ENCODE measurements at regions of chr17 and their contacts with region 1.

Region 1: GRCh38 chr17:81412490-81413093 is 17.3 kb downstream of the BAHCC1 start:
- DNase-seq: no peak
- H3K4me3 ChIP-seq: no peak overlapping the region
- H3K27ac ChIP-seq: no peak overlapping the region
- H3K4me1 ChIP-seq: peaks cover 0 to 3% (median 0%) of the 10 kb centered on the region in 4 experiments; a peak in 1 of 7 replicates
- H3K27me3 ChIP-seq: peaks cover 0 to 3% (median 0%) of the 10 kb centered on the region in 4 experiments; a peak in 3 of 7 replicates
- CTCF ChIP-seq: no peak
- EP300 ChIP-seq: no peak
- POLR2A ChIP-seq: no peak
- RAD21 ChIP-seq: no peak

Region 2: GRCh38 chr17:81346090-81346907 is 66.3 kb before region 1 on chr17:
- CTCF ChIA-PET with region 1: no interaction called
- POLR2A ChIA-PET with region 1: no interaction called
- DNase-seq: peak in 1 of 2 experiments; percentile 98
- H3K4me3 ChIP-seq: peak overlapping the region; percentile 58 to 80 (median 66)
- H3K27ac ChIP-seq: no peak overlapping the region
- H3K4me1 ChIP-seq: peaks cover 0 to 21% (median 7%) of the 10 kb centered on the region in 4 experiments; a peak in 5 of 7 replicates
- H3K27me3 ChIP-seq: peaks cover 31 to 75% (median 62%) of the 10 kb centered on the region in 4 experiments
- CTCF ChIP-seq: no peak
- EP300 ChIP-seq: no peak
- POLR2A ChIP-seq: peak in 1 of 2 experiments; percentile 43; a peak in 2 of 3 replicates
- RAD21 ChIP-seq: no peak

Region 3: GRCh38 chr17:81394921-81395599 is 17.5 kb before region 1 on chr17 and contains the start of gene BAHCC1:
- CTCF ChIA-PET with region 1: interaction called, 15 read pairs
- POLR2A ChIA-PET with region 1: interaction called, 3 read pairs
- DNase-seq: peak; percentile 95 to 97
- H3K4me3 ChIP-seq: peak within 1 kb of the TSS; percentile 37 to 65 (median 47)
- H3K27ac ChIP-seq: no peak within 1 kb of the TSS
- H3K4me1 ChIP-seq: peaks cover 6 to 33% (median 27%) of the 10 kb centered on the region in 4 experiments
- H3K27me3 ChIP-seq: peaks cover 43 to 62% (median 55%) of the 10 kb centered on the region in 4 experiments; a peak in 6 of 7 replicates
- CTCF ChIP-seq: 0 out of 4 replicates have a peak, but pooled peaks of 1 of the 3 experiments have one; percentile 1
- EP300 ChIP-seq: no peak
- POLR2A ChIP-seq: no peak
- RAD21 ChIP-seq: no peak
- total RNA-seq, gene BAHCC1: 0.58 and 0.71 TPM in 2 replicates

Region 4: DNA sequence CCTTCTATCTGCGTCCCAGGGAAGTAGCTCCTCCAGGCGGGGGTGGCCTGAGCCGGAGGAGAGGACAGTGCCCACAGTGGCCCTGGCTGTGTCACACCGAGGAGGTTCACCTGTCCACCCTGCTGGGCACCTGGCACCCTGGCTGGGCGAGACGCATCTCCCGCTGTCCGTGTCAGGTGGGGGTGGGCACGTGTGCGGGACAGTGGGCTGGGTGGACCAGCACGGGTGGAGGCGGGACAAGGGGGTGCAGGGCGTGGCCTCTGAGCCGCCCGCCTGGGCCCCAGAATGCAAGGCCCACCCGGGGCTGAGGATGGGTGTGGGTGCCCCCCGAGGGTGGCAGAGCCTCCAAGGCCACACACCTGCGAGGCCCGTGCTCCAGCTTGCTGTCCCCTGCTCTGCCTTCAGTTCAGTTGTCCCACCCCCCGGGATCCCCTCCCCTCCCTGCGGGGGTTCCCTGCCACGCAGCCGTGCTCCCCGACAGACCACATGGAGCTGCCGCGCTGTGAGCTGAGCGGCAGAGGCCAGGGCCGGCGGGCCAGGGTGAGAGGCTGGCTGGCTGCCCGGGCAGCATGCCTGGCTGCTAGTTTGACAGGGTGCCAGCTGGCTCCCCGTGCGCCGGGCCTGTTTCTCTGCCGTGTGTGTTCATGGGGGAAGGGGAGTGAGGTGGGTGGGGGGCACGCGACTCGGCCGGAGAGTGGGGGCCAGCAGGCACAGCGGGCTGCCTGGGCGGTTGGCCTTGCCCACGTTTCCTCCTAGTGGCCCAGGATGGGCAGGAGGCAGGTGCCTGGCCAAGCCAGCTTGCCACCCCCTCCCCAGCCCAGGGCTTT is 16.6 kb after region 1 on chr17:
- CTCF ChIA-PET with region 1: interaction called, 19 read pairs
- POLR2A ChIA-PET with region 1: interaction called, 3 read pairs
- DNase-seq: no peak
- H3K4me3 ChIP-seq: no peak overlapping the region
- H3K27ac ChIP-seq: no peak overlapping the region
- H3K4me1 ChIP-seq: peaks cover 0 to 3% (median 0%) of the 10 kb centered on the region in 4 experiments; a peak in 3 of 7 replicates
- H3K27me3 ChIP-seq: no peaks in the 10 kb centered on the region
- CTCF ChIP-seq: no peak
- EP300 ChIP-seq: no peak
- POLR2A ChIP-seq: no peak
- RAD21 ChIP-seq: no peak